K562 (cell line): ENCODE measurements at regions of chr20 and their contacts with region 1.

Region 1: GRCh38 chr20:401682-402495 is 6.2 kb upstream of the RBCK1 start:
- DNase-seq: peak in 1 of 4 experiments; percentile 56
- ATAC-seq: peak; percentile 21
- H3K4me3 ChIP-seq: no peak overlapping the region
- H3K27ac ChIP-seq: peak overlapping the region; percentile 71; the same call in 1 of the 3 replicates
- H3K4me1 ChIP-seq: peaks cover 7 to 35% of the 10 kb centered on the region in 2 experiments; a peak in 4 of 5 replicates
- H3K27me3 ChIP-seq: no peaks in the 10 kb centered on the region
- CTCF ChIP-seq: no peak
- EP300 ChIP-seq: peak; percentile 99
- POLR2A ChIP-seq: no peak
- RAD21 ChIP-seq: peak in 1 of 2 experiments; percentile 28; a peak in 1 of 4 replicates

Region 2: GRCh38 chr20:371755-372542 is 29.9 kb before region 1 on chr20:
- CTCF ChIA-PET with region 1: no interaction called
- POLR2A ChIA-PET with region 1: interaction called, 13 read pairs
- in situ Hi-C with region 1: no loop called
- intact Hi-C with region 1: no loop called
- DNase-seq: peak; percentile 77 to 97 (median 83)
- ATAC-seq: peak; percentile 80
- H3K4me3 ChIP-seq: no peak overlapping the region
- H3K27ac ChIP-seq: peak overlapping the region; percentile 99
- H3K4me1 ChIP-seq: peaks cover 56 to 80% of the 10 kb centered on the region in 2 experiments
- H3K27me3 ChIP-seq: no peaks in the 10 kb centered on the region
- CTCF ChIP-seq: peak in 2 of 3 experiments; percentile 21 to 23; a peak in 3 of 6 replicates
- EP300 ChIP-seq: peak; percentile 98
- POLR2A ChIP-seq: peak; percentile 64
- RAD21 ChIP-seq: peak; percentile 40 to 54; a peak in 3 of 4 replicates

Region 3: GRCh38 chr20:381581-382290 is 20.2 kb before region 1 on chr20:
- CTCF ChIA-PET with region 1: no interaction called
- POLR2A ChIA-PET with region 1: interaction called, 95 read pairs
- in situ Hi-C with region 1: no loop called
- intact Hi-C with region 1: no loop called
- DNase-seq: peak; percentile 71 to 88 (median 77)
- ATAC-seq: peak; percentile 75
- H3K4me3 ChIP-seq: peak overlapping the region; percentile 93
- H3K27ac ChIP-seq: peak overlapping the region; percentile 96
- H3K4me1 ChIP-seq: peaks cover 25 to 26% of the 10 kb centered on the region in 2 experiments; a peak in 4 of 5 replicates
- H3K27me3 ChIP-seq: no peaks in the 10 kb centered on the region
- CTCF ChIP-seq: no peak
- EP300 ChIP-seq: peak; percentile 27; the same call in 1 of the 2 replicates
- POLR2A ChIP-seq: peak; percentile 82
- RAD21 ChIP-seq: no peak

Region 4: DNA sequence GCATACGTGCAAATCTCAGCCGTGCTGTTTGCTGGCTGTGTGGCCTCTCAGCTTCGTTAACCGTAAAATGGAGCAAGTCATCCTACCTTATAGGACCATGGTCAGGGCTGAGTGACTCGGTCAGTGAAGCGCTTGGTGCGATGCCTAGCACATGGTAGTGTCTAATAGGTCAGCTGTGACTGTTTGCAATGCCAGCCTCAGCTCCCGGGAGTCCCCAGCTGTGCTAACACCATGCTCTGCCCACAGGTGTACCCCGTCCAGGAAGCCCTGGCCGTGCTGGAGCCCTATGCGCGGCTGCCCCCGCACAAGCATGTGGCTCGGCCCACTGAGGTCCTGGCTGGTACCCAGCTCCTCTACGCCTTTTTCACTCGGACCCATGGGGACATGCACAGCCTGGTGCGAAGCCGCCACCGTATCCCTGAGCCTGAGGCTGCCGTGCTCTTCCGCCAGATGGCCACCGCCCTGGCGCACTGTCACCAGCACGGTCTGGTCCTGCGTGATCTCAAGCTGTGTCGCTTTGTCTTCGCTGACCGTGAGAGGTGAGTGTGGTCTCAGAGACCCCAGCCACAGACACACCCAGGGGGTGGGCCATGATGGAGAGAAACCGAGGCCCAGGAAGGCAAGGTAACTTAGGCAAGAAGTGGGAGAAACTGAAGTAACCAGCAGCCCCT is 10.7 kb before region 1 on chr20:
- CTCF ChIA-PET with region 1: no interaction called
- POLR2A ChIA-PET with region 1: interaction called, 95 read pairs
- in situ Hi-C with region 1: no loop called
- intact Hi-C with region 1: no loop called
- DNase-seq: no peak
- ATAC-seq: peak; percentile 28
- H3K4me3 ChIP-seq: no peak overlapping the region
- H3K27ac ChIP-seq: no peak overlapping the region
- H3K4me1 ChIP-seq: peaks cover 0 to 8% of the 10 kb centered on the region in 2 experiments; a peak in 2 of 5 replicates
- H3K27me3 ChIP-seq: no peaks in the 10 kb centered on the region
- CTCF ChIP-seq: no peak
- EP300 ChIP-seq: no peak
- POLR2A ChIP-seq: no peak
- RAD21 ChIP-seq: no peak

Region 5: DNA sequence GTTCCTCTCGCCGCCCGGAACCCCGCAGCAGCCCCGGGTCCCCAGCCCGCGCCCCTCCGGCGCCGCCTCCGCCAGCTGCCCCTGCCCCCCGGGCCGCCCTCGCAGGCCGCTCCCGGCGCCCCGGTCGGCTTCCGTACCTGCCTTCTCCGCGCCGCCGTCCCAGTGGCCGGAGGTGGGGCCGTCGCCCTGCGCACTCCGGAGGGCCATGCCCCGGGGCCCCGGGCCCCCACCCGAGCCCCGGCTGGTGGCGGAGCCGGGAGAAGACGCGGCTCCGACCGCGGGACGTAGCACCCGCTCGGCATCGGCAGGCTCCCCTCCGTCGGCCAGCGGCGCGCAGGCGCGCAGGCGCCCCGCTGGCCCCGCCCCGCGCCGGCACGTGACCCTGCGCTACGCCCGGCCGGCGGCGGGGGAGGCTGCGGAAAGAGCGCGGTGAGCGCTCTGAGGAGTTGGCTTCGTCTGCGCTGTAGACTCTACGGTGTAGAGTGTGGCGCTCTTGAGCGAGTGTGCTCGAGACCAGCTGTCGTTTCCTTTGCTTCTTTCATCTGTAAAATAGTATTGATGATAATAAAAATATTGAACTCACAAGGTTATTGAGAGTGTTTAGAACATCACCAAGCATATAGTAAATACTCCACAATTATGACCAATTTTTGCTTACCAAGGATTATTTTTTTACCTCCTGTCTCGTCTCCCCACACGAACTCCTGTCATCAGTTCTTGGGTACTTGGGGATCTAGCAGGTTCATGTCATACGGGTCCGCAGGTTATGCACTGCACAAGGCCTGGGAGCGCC is 60.5 kb after region 1 on chr20 and contains the start of gene TBC1D20:
- CTCF ChIA-PET with region 1: no interaction called
- POLR2A ChIA-PET with region 1: interaction called, 3 read pairs
- in situ Hi-C with region 1: no loop called
- intact Hi-C with region 1: loop called (anchors 5 kb)
- DNase-seq: peak; percentile 85 to 90 (median 88)
- ATAC-seq: peak; percentile 93
- H3K4me3 ChIP-seq: peak within 1 kb of the TSS; percentile 93
- H3K27ac ChIP-seq: peak within 1 kb of the TSS; percentile 89
- H3K4me1 ChIP-seq: peaks cover 4 to 21% of the 10 kb centered on the region in 2 experiments; a peak in 4 of 5 replicates
- H3K27me3 ChIP-seq: no peaks in the 10 kb centered on the region
- CTCF ChIP-seq: peak in 2 of 3 experiments; percentile 29; a peak in 3 of 6 replicates
- EP300 ChIP-seq: no peak
- POLR2A ChIP-seq: peak; percentile 68
- RAD21 ChIP-seq: peak in 1 of 2 experiments; percentile 7; a peak in 1 of 4 replicates
- polyA plus RNA-seq, gene TBC1D20: 7.0 to 9.5 TPM

Region 6: GRCh38 chr20:531608-532007 is 129.7 kb after region 1 on chr20:
- CTCF ChIA-PET with region 1: no interaction called
- POLR2A ChIA-PET with region 1: no interaction called
- in situ Hi-C with region 1: no loop called
- intact Hi-C with region 1: no loop called
- DNase-seq: no peak
- ATAC-seq: no peak
- H3K4me3 ChIP-seq: no peak overlapping the region
- H3K27ac ChIP-seq: peak overlapping the region; percentile 38; the same call in 1 of the 3 replicates
- H3K4me1 ChIP-seq: peaks cover 9 to 23% of the 10 kb centered on the region in 2 experiments
- H3K27me3 ChIP-seq: no peaks in the 10 kb centered on the region
- CTCF ChIP-seq: no peak
- EP300 ChIP-seq: no peak
- POLR2A ChIP-seq: no peak
- RAD21 ChIP-seq: no peak